Posterior cingulate gyrus (tissue), 11 donors: ENCODE measurements at regions of chr1 and their contacts with region 1.

Region 1: GRCh38 chr1:246506674-246507481 is at the start of gene SMYD3:
- DNase-seq: peak; percentile 57 to 96 (median 73)

Region 2: DNA sequence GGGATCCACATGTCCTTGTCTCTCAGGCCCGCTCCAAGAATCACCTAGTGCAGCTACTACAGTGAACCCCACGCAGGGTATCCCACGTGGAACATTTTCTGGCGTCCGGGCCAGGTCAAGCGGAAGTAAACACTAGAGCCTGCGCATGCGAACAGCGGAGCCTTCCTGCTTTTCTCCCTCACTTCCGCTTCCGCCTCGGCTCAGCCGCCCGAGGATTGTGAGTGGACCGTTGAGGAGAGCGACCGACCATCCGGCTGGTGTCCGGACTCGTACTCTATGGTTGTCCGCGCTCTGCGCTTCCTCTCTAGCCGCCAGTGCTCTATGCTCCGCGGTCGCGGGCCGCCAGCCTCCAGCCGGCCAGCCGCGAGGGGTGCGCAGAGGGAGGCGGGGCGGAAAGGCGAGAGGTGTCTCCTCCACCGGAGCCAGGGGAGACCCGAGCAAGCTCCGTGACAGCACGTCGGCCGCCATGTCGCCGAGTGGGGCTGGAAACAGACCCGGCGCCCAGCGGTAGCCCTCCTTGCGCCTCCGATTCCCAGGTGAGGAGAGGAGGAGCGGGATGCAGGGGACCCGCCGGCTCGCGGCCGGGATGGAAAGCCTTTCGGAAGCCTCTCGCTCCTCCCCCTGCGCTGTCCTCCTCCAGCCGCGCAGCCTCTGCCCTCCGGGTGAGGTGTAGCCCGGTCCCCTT is 59.4 kb after region 1 on chr1 and contains the starts of genes CNST and TFB2M:
- intact Hi-C with region 1: loop called (anchors 5 kb)
- DNase-seq: peak; percentile 95 to 99 (median 96)

Region 3: DNA sequence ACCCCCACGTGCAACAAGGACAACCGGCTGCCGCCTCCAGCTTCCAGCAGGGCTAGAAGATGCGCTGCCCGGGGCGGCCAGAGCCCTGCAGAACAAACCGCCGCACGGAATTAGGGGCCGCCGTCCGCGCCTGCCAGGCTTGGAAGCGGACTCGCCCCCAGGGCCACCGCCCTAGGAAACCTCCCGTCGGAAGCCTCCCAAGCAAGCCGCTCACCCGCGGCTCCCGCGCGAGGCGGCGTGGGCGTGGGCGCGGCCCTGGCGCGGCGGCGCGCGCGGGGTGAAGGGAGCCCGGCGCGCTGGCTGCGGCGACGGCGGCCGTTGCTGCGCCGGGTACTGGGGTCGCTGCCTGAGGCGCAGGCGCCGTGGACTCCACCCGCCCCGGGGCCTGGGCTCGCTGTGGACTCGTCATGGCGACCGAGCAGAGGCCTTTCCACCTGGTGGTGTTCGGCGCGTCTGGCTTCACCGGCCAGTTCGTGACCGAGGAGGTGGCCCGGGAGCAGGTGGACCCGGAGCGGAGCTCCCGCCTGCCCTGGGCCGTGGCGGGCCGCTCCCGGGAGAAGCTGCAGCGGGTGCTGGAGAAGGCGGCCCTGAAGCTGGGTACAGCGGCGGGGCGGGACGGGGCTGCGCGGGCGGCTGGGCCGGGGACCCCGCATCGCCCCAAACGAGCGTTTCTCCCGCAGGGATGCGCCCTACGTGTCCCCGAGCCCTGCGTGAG is 217.3 kb after region 1 on chr1 and contains the start of gene SCCPDH:
- intact Hi-C with region 1: loop called (anchors 1 kb)
- DNase-seq: peak; percentile 66 to 97 (median 80)